Thyroid gland (tissue), 4 donors: ENCODE measurements at regions of chr1 and their contacts with region 1.

Region 1: DNA sequence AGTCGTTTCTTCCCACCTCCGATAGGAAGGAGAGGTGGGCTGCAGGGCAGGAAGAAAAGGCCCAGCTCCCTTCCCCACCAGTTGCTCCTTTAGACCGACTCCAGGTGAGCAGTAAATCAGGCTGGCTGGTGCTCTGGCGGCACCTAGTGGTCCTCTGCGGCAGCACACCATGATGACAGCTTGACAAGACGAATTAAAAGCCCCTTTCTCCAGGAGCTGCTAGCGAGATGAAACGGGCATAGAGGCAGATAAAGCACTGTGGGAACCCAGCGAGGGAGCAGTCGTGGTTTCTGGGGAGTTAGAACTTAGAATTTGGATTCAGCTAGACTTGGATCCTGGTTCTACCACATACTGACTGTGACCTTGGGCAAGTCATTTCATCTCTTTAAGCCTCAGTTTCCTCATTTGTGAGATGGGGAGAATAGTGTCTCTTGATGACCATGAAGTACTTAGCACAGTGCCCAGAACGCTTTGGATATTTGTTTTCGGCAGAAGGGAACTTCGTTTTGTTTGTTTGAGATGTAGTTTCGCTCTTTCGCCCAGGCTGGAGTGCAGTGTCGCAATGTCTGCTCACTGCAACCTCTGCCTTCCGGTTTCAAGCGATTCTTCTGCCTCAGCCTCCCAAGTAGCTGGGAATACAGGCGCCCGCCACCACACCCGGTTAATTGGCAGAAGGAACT is 21.8 kb upstream of the COL9A2 start:
- DNase-seq: peak; percentile 84 to 89
- H3K4me3 ChIP-seq: no peak overlapping the region
- H3K27ac ChIP-seq: no peak overlapping the region
- H3K4me1 ChIP-seq: no peaks in the 10 kb centered on the region
- H3K27me3 ChIP-seq: no peaks in the 10 kb centered on the region
- CTCF ChIP-seq: peak; percentile 93 to 99 (median 98)
- POLR2A ChIP-seq: no peak

Region 2: GRCh38 chr1:40094466-40095110 is 244.3 kb before region 1 on chr1:
- intact Hi-C with region 1: loop called (anchors 5 kb)
- DNase-seq: no peak
- H3K4me3 ChIP-seq: no peak overlapping the region
- H3K27ac ChIP-seq: no peak overlapping the region
- H3K4me1 ChIP-seq: peaks cover 5 to 9% of the 10 kb centered on the region in 2 donors
- H3K27me3 ChIP-seq: no peaks in the 10 kb centered on the region
- CTCF ChIP-seq: no peak
- POLR2A ChIP-seq: no peak

Region 3: GRCh38 chr1:40143891-40144575 is 194.9 kb before region 1 on chr1:
- intact Hi-C with region 1: loop called (anchors 5 kb)
- DNase-seq: peak; percentile 56 to 60
- H3K4me3 ChIP-seq: no peak overlapping the region
- H3K27ac ChIP-seq: no peak overlapping the region
- H3K4me1 ChIP-seq: peaks cover 0 to 4% of the 10 kb centered on the region in 2 donors
- H3K27me3 ChIP-seq: no peaks in the 10 kb centered on the region
- CTCF ChIP-seq: peak; percentile 46 to 82 (median 73)
- POLR2A ChIP-seq: no peak

Region 4: DNA sequence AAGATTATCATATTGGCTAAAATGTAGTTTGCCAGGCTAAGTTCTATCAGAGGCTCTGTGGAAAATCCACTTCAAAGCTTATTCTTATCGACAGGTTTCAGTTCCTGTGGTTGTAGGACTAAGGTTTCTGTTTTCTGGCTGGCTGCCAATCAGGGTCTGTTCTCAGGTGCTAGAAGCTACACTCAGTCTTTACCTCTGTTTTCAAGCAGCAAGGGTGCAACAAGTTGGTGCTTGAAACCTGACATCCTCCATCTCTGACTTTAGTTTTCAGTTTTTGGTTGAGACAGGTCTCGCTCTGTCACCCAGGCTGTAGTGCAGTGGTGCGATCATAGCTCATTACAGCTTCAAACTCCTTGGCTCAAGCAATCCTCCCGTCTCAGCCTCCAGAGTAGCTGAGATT is 106.4 kb before region 1 on chr1:
- intact Hi-C with region 1: no loop called
- DNase-seq: no peak
- H3K4me3 ChIP-seq: no peak overlapping the region
- H3K27ac ChIP-seq: no peak overlapping the region
- H3K4me1 ChIP-seq: no peaks in the 10 kb centered on the region
- H3K27me3 ChIP-seq: no peaks in the 10 kb centered on the region
- CTCF ChIP-seq: no peak
- POLR2A ChIP-seq: no peak

Region 5: GRCh38 chr1:40404670-40405462 is 66.0 kb after region 1 on chr1:
- intact Hi-C with region 1: loop called (anchors 10 kb)
- DNase-seq: peak in 1 of 2 donors; percentile 34
- H3K4me3 ChIP-seq: no peak overlapping the region
- H3K27ac ChIP-seq: no peak overlapping the region
- H3K4me1 ChIP-seq: peaks cover 2 to 4% of the 10 kb centered on the region in 2 donors
- H3K27me3 ChIP-seq: no peaks in the 10 kb centered on the region
- CTCF ChIP-seq: peak; percentile 73 to 87 (median 86)
- POLR2A ChIP-seq: no peak